ENCODE measurements at regions of chr14 and their contacts with region 1.

Region 1: DNA sequence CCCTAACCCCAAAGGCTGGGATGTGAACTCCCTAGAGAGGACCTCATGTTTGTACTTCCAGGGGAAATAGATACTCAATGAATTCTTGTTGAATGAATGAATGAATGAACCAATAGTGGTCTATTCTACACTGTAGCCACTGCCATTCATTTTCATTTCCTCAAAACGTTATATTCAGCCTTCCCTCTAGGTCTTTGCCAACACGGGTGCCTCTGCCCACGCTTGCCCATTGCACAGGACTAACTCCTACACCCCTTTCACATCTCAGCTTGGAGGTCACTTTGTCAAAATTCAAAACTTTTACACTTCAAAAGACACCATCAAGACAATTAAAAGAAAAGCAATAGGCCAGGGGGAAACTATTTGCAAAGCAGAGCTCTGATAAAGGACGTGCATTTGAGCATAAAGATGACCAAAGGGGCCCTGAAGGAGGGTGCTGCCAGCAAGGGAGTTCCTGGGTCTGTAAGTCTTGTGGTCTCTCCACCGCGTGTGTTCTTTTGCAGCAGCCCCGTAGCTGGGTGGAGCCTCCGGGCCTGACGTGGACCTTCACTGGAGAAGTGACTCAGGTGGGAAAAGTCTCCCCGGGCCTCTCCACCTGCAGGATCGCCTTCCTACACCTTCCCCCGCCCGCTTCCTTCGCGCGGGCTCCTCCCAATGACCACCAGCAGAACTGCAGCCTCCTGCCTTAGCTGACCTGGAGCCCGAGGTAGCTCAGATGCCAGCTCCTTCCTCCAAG is 31.5 kb downstream of the TMEM63C start:
- DNase-seq: peak; percentile 87
- ATAC-seq: peak; percentile 98
- H3K4me3 Mint-ChIP-seq: no peak overlapping the region
- H3K27ac Mint-ChIP-seq: no peak overlapping the region
- H3K4me1 Mint-ChIP-seq: peaks cover 17% of the 10 kb centered on the region
- H3K27me3 Mint-ChIP-seq: peaks cover 3% of the 10 kb centered on the region; the same call in 1 of the 2 replicates
- CTCF ChIP-seq: peak; percentile 60; the same call in 1 of the 2 replicates

Region 2: DNA sequence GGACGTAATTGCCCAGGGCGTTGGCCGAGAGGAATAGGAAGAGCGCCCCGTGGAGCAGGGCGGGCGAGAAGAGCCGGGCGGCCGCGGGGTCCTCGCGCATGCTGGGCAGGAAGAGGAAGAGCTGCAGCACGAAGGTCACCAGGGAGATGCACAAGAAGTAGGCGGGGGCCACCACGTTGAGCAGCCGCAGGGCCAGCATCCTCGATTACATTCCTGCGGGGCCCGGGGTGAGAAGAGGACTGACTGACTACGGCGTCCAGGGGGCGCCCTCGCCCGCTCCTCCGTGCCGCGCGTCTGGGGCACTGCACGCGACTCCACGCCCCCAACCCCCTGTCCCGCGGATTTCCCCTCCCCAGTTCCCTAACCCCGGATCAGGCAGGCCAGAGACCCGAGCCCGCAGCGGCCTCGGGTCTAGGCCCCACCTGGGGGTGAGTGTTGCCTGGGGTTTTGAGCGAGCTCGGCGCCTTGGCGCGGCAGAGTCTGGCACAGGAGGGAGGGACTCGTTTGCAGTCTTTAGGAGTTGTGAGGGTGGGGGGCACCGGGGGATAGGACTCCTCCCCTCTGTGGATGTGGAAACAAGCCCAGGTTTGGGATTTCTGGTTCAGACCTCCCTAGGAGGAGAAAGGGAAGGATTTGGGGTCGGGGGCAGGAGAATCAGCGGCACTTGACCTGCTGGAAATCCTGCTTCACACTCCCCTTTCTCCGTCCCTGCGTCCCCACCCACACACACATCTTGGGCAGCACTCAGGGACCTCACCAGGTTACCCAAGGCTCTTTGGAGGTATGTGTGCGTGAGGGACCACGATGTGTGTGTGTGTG is 73.4 kb before region 1 on chr14:
- CTCF ChIA-PET with region 1: interaction called, 43 read pairs
- POLR2A ChIA-PET with region 1: no interaction called
- DNase-seq: peak; percentile 90
- ATAC-seq: peak; percentile 58
- H3K4me3 Mint-ChIP-seq: peak overlapping the region; percentile 92
- H3K27ac Mint-ChIP-seq: peak overlapping the region; percentile 32; the same call in 1 of the 2 replicates
- H3K4me1 Mint-ChIP-seq: peaks cover 42% of the 10 kb centered on the region
- H3K27me3 Mint-ChIP-seq: peaks cover 4% of the 10 kb centered on the region; the same call in 1 of the 2 replicates
- CTCF ChIP-seq: peak; percentile 75

Region 3: GRCh38 chr14:77181603-77182437 is 31.3 kb before region 1 on chr14 and contains the start of gene TMEM63C:
- CTCF ChIA-PET with region 1: interaction called, 19 read pairs
- POLR2A ChIA-PET with region 1: interaction called, 3 read pairs
- DNase-seq: peak; percentile 98
- ATAC-seq: peak; percentile 97
- H3K4me3 Mint-ChIP-seq: peak within 1 kb of the TSS; percentile 74
- H3K27ac Mint-ChIP-seq: peak within 1 kb of the TSS; percentile 89
- H3K4me1 Mint-ChIP-seq: peaks cover 9% of the 10 kb centered on the region
- H3K27me3 Mint-ChIP-seq: peaks cover 9% of the 10 kb centered on the region
- CTCF ChIP-seq: no peak
- total RNA-seq, gene TMEM63C: 3.6 to 8.8 TPM (median 6.0 TPM) in 3 replicates

Region 4: DNA sequence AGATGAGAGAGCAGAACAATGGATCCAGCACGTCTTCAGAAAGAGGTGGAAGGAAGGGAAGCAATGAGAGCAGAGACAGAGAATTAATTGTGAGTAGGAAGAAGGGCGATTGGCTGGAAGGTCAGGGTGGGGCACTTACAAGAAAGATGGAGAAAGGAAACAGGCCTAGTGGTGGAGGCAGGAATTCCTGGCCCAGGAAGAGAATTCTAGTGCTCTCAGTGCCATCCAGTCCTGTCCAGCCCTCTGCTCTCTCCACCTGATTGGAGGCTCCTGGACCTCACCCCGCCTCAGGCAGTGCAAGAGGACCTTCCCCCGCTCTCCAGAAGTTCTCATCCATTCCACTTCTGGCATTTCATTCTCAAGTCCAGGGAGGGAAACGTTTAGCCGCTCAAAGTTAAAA is 14.9 kb after region 1 on chr14:
- CTCF ChIA-PET with region 1: interaction called, 27 read pairs
- POLR2A ChIA-PET with region 1: no interaction called
- DNase-seq: no peak
- ATAC-seq: peak; percentile 85
- H3K4me3 Mint-ChIP-seq: no peak overlapping the region
- H3K27ac Mint-ChIP-seq: no peak overlapping the region
- H3K4me1 Mint-ChIP-seq: peaks cover 24% of the 10 kb centered on the region
- H3K27me3 Mint-ChIP-seq: no peaks in the 10 kb centered on the region; the same call in 1 of the 2 replicates
- CTCF ChIP-seq: no peak

Region 5: DNA sequence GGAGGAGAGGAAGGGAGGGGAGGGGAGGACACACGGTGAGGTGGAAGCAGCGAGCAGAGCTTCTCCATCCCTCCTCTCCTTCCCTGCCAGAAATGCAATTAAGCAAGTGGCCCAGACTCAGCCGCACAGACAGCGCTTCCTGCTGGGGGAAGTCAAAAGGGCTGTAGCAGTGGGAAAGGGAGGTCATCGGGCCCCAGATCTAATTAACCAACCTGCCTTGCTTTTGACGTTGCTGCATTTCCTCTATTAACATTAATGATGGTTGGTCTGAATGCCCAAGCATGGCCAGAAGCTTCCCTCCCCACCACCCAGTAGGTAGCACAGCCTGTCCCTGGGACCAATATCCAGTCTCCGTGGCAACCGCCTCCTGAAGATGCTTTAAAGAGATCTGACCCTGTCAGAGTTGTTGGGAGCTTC is 62.5 kb after region 1 on chr14:
- CTCF ChIA-PET with region 1: interaction called, 18 read pairs
- POLR2A ChIA-PET with region 1: no interaction called
- DNase-seq: no peak
- ATAC-seq: peak; percentile 48
- H3K4me3 Mint-ChIP-seq: no peak overlapping the region
- H3K27ac Mint-ChIP-seq: no peak overlapping the region
- H3K4me1 Mint-ChIP-seq: peaks cover 3% of the 10 kb centered on the region; the same call in 1 of the 2 replicates
- H3K27me3 Mint-ChIP-seq: peaks cover 33% of the 10 kb centered on the region
- CTCF ChIP-seq: no peak

Measured in WTC11 (cell line).